ENCODE measurements at regions of chr1 and their contacts with region 1.

Region 1: GRCh38 chr1:47725992-47726855 is 271.0 kb downstream of the TRABD2B start:
- DNase-seq: peak; percentile 58
- H3K4me3 ChIP-seq: peak overlapping the region in 1 of 3 experiments; percentile 8
- H3K27ac ChIP-seq: no peak overlapping the region
- H3K4me1 ChIP-seq: peaks cover 20% of the 10 kb centered on the region
- H3K27me3 ChIP-seq: no peaks in the 10 kb centered on the region
- CTCF ChIP-seq: peak; percentile 94

Region 2: DNA sequence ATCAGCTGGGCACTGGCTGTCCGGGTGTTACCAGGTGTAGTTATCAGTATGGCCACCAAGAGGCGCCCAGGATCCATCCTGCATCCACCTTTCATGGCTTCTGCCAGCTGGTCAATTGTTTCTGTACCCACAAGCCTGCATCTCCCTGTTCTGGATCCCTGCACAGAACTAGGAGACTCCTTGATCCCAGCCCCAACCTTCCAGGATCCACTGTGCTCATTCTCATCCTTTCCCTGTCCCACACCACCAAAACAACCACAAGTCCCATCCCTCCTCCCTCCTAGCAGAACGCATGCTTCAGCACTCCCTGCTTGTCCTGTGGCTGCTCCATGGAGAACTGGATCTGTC is 337.4 kb before region 1 on chr1:
- CTCF ChIA-PET with region 1: no interaction called
- dilution Hi-C with region 1: no loop called
- in situ Hi-C with region 1: no loop called
- intact Hi-C with region 1: loop called (anchors 1 kb)
- DNase-seq: peak; percentile 56
- H3K4me3 ChIP-seq: no peak overlapping the region
- H3K27ac ChIP-seq: no peak overlapping the region
- H3K4me1 ChIP-seq: no peaks in the 10 kb centered on the region
- H3K27me3 ChIP-seq: no peaks in the 10 kb centered on the region
- CTCF ChIP-seq: peak; percentile 87 to 89

Region 3: DNA sequence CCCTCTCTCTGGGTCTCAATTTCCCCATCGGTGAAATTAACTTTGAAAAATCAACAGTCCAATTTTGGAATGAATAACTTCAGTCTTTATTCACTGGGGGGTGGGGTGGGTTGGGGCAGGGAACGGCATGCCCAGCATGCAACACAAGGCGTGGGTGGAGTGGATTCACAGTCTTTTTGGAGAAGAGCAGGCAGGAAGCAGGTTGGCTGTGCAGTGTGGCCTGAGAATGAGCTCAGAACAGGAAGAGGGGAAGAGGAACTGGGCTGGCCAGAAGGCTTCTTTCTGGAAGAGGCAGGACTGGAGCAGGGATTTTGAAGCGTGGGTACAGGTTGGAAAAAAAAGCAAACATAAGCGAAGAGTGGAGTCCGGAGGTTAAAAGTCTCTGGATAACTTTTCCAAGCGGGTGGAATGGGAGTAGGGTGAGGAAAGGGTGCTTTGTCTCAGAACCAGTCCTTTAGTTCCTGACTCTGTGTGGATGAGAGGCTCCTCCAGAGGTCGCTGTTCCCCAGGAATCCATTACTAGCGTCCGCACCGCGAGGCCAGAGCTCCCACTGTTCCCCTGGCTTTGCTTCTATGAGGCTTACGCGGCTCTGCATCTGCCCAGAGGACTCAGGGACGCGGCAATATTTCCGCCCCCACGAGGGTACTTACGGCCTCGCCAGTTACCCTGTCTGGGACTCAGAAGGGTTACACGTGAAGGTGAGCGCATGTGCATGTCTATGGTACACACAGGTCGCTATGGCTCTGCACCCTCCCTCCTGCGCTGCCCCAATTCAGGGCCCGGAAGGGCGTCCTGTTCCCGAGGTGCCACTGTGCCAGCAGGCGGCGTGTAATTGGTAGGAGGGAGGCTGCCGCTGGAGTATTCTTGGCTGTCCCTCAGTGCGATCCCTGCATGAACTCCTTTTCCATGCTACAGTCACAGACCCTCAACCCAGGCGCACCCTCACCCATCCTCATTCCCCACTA is 293.9 kb before region 1 on chr1:
- CTCF ChIA-PET with region 1: interaction called, 15 read pairs
- dilution Hi-C with region 1: no loop called
- in situ Hi-C with region 1: no loop called
- intact Hi-C with region 1: loop called (anchors 1 kb)
- DNase-seq: peak; percentile 78
- H3K4me3 ChIP-seq: peak overlapping the region in 2 of 3 experiments; percentile 25 to 36
- H3K27ac ChIP-seq: peak overlapping the region; percentile 56
- H3K4me1 ChIP-seq: peaks cover 52% of the 10 kb centered on the region
- H3K27me3 ChIP-seq: no peaks in the 10 kb centered on the region
- CTCF ChIP-seq: peak; percentile 78 to 92

Region 4: GRCh38 chr1:48139275-48139674 is 413.1 kb after region 1 on chr1:
- CTCF ChIA-PET with region 1: no interaction called
- dilution Hi-C with region 1: no loop called
- in situ Hi-C with region 1: no loop called
- intact Hi-C with region 1: no loop called
- DNase-seq: no peak
- H3K4me3 ChIP-seq: no peak overlapping the region
- H3K27ac ChIP-seq: no peak overlapping the region
- H3K4me1 ChIP-seq: no peaks in the 10 kb centered on the region
- H3K27me3 ChIP-seq: peaks cover 4% of the 10 kb centered on the region
- CTCF ChIP-seq: no peak